RWPE1 (cell line): ENCODE measurements at regions of chr7 and their contacts with region 1.

Region 1: GRCh38 chr7:786472-787255 is 45.6 kb upstream of the SUN1 start:
- DNase-seq: peak; percentile 80
- H3K27ac ChIP-seq: peak overlapping the region; percentile 36; the same call in 1 of the 2 replicates
- CTCF ChIP-seq: peak; percentile 94

Region 2: DNA sequence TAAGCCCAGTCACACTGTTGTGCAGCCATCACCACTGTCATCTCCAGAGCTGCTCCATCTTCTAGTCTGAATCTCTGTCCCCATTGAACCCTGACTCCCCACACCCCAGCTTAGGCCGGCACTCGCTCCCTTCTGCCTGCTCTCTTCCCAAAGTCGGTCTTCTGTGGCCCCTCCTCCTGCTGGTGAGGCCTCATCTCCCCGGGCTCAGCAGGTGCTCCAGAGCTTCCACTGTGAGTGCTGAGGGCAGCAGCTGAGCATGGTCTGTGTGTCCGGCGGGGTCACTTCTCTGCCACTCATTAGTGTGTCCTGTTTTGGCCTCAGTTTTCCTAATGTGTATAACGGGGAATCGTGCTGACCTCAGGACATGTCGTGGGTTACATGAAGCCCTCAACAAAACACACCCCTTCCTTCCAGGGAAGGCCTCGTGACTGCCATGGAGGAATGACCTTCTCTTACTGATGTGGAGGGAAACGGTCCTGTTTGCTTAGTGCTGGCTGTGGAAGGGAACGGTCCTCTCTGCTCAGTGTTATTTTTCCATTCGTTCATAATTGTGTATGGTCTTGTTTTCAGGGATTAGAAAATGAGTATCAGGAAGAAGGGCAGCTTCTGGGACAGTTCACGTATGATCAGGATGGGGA is 85.4 kb after region 1 on chr7:
- CTCF ChIA-PET with region 1: interaction called, 10 read pairs
- POLR2A ChIA-PET with region 1: no interaction called
- DNase-seq: no peak
- H3K27ac ChIP-seq: peak overlapping the region; percentile 62
- CTCF ChIP-seq: no peak